ENCODE measurements at regions of chr2 and their contacts with region 1.

Region 1: DNA sequence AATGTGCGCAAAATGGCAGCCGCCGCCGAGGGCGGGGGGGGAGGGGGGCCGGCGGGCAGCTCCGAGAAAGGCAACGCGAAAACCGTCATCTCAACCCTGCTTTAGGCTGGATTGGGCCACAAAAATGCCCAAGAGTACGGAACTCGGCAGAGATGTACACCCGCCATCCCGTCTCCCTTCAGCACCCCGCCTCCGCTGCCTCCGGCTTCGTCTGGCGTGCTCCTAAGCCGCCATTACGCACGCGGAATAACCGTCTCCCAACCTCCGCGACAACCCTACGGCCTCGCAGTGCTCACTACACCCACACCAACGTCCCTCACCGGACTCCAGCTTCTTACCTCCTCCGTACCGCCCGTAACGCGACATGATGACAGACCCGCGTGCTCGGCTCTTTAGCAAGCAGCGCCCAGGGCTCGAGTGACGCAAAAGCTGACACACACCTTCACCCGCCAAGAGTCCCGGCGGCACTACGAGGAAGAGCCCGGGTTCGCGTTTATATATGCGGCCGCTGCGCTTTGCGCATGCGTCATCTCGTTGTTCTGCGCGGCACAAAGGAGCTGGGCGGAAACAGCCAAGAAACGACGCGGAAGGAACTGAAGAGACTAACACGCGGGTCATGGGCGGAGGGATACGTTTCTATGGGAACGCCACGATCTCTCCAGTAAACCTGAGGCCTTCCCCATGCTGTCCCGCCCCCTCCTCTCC is at the start of gene SRSF7:
- DNase-seq: peak; percentile 98 to 99
- H3K4me3 ChIP-seq: peak within 1 kb of the TSS; percentile 93 to 100 (median 97)
- H3K27ac ChIP-seq: peak within 1 kb of the TSS; percentile 100
- H3K4me1 ChIP-seq: peaks cover 0 to 8% (median 2%) of the 10 kb centered on the region in 4 experiments; a peak in 3 of 7 replicates
- H3K27me3 ChIP-seq: no peaks in the 10 kb centered on the region
- CTCF ChIP-seq: no peak
- EP300 ChIP-seq: 0 out of 3 replicates have a peak, but pooled peaks of 1 of the 2 experiments have one; percentile 63
- POLR2A ChIP-seq: peak; percentile 100
- RAD21 ChIP-seq: peak; percentile 2 to 6; a peak in 1 of 4 replicates
- total RNA-seq, gene SRSF7: 370 and 378 TPM in 2 replicates

Region 2: GRCh38 chr2:38549071-38549704 is 201.9 kb before region 1 on chr2:
- CTCF ChIA-PET with region 1: no interaction called
- POLR2A ChIA-PET with region 1: interaction called, 13 read pairs
- DNase-seq: no peak
- H3K4me3 ChIP-seq: no peak overlapping the region
- H3K27ac ChIP-seq: no peak overlapping the region
- H3K4me1 ChIP-seq: peaks cover 0 to 4% (median 1%) of the 10 kb centered on the region in 4 experiments; a peak in 1 of 7 replicates
- H3K27me3 ChIP-seq: no peaks in the 10 kb centered on the region
- CTCF ChIP-seq: no peak
- EP300 ChIP-seq: no peak
- POLR2A ChIP-seq: no peak
- RAD21 ChIP-seq: no peak

Region 3: GRCh38 chr2:38581193-38582147 is 169.6 kb before region 1 on chr2:
- CTCF ChIA-PET with region 1: interaction called, 7 read pairs
- POLR2A ChIA-PET with region 1: interaction called, 33 read pairs
- DNase-seq: no peak
- H3K4me3 ChIP-seq: no peak overlapping the region
- H3K27ac ChIP-seq: no peak overlapping the region
- H3K4me1 ChIP-seq: peaks cover 0 to 13% (median 2%) of the 10 kb centered on the region in 4 experiments; a peak in 4 of 7 replicates
- H3K27me3 ChIP-seq: no peaks in the 10 kb centered on the region
- CTCF ChIP-seq: peak in 2 of 3 experiments; percentile 57 to 68; a peak in 3 of 4 replicates
- EP300 ChIP-seq: no peak
- POLR2A ChIP-seq: peak in 1 of 2 experiments; percentile 4; a peak in 1 of 3 replicates
- RAD21 ChIP-seq: peak; percentile 75 to 78

Region 4: GRCh38 chr2:38672445-38673391 is 78.3 kb before region 1 on chr2:
- CTCF ChIA-PET with region 1: no interaction called
- POLR2A ChIA-PET with region 1: interaction called, 28 read pairs
- DNase-seq: no peak
- H3K4me3 ChIP-seq: no peak overlapping the region
- H3K27ac ChIP-seq: no peak overlapping the region
- H3K4me1 ChIP-seq: peaks cover 0 to 4% (median 0%) of the 10 kb centered on the region in 4 experiments; a peak in 2 of 7 replicates
- H3K27me3 ChIP-seq: no peaks in the 10 kb centered on the region
- CTCF ChIP-seq: no peak
- EP300 ChIP-seq: no peak
- POLR2A ChIP-seq: no peak
- RAD21 ChIP-seq: no peak

Region 5: DNA sequence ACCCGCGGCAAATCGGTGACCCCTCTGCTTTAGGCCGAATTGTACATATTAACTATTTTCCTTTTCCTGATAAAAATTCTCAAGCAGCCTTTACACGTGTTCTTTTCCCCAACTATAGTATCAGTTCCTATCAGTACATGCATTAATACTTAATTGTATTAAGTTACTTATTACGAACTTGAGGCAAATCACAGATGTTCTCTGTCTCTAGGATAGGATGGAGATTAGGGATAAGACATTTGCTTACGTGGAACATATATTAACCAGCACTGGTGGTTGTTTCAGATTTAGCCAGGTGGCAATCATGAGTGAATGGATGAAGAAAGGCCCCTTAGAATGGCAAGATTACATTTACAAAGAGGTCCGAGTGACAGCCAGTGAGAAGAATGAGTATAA is 27.6 kb after region 1 on chr2:
- CTCF ChIA-PET with region 1: no interaction called
- POLR2A ChIA-PET with region 1: interaction called, 124 read pairs
- DNase-seq: no peak
- H3K4me3 ChIP-seq: peak overlapping the region; percentile 78 to 98 (median 90)
- H3K27ac ChIP-seq: no peak overlapping the region
- H3K4me1 ChIP-seq: no peaks in the 10 kb centered on the region
- H3K27me3 ChIP-seq: no peaks in the 10 kb centered on the region; a peak in 2 of 7 replicates
- CTCF ChIP-seq: no peak
- EP300 ChIP-seq: no peak
- POLR2A ChIP-seq: no peak
- RAD21 ChIP-seq: no peak

Region 6: DNA sequence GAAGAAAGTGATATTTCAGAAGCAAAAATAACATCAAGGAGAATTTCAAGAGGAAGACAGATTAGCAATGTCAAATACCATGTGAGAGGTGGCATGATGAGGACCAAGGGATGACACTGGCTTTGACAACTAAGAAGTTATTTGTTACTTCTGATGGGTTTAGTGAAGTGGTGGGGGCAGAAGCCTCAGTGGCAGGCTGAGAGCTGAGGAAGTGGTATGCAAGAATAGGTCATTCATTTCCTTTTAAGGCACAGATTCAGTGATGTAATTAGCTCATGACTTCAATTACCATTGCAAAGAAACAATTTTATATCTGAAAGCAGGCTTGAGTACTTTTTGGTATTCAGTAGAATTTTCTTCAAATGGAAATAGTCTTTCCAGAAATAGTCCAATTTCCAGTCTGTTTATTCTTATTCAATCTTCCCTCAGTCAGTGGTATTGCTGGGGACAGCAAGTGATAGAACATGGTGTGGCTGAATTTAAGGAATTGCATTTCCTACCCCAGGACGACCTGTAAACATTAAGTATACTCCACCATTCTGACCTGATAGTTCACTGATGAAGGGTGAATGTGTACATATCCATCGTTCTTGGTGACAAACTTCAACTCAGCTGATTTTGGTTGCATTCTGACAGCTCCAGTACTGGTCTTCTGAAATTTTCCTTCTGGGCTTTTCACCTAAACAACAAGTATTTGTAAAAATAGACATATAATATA is 55.1 kb after region 1 on chr2:
- CTCF ChIA-PET with region 1: no interaction called
- POLR2A ChIA-PET with region 1: interaction called, 12 read pairs
- DNase-seq: no peak
- H3K4me3 ChIP-seq: no peak overlapping the region
- H3K27ac ChIP-seq: no peak overlapping the region
- H3K4me1 ChIP-seq: no peaks in the 10 kb centered on the region
- H3K27me3 ChIP-seq: no peaks in the 10 kb centered on the region
- CTCF ChIP-seq: no peak
- EP300 ChIP-seq: no peak
- POLR2A ChIP-seq: no peak
- RAD21 ChIP-seq: no peak

Region 7: DNA sequence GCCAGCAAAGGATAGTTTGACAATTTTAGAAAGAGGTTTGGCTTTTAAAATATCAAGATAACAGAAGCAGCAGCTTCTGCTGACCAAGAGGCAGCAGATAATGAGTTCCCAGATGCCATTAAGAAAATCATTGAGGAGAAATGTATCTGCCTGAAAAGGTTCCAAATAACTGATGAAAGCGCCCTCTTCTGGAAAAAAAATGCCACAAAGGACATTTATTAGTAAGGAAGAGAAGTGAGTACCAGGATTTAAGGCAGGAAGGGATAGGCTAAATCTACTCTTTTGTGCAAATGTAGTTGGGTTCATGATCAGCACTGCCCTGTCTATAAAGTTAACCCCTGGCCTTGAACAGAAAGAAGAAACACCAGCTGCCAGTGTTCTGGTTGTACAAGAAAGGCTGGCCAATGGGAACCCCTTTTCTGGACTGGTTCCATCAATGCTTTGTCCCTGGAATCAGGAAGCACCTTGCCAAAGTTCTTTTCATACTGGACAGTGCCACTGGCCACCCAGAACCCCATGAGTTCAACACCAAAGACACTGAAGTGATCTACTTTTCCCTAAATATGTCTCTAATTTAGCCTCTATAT is 84.1 kb after region 1 on chr2:
- CTCF ChIA-PET with region 1: interaction called, 5 read pairs
- POLR2A ChIA-PET with region 1: interaction called, 12 read pairs
- DNase-seq: no peak
- H3K4me3 ChIP-seq: no peak overlapping the region
- H3K27ac ChIP-seq: no peak overlapping the region
- H3K4me1 ChIP-seq: no peaks in the 10 kb centered on the region
- H3K27me3 ChIP-seq: no peaks in the 10 kb centered on the region
- CTCF ChIP-seq: peak in 2 of 3 experiments; percentile 29 to 51; a peak in 2 of 4 replicates
- EP300 ChIP-seq: no peak
- POLR2A ChIP-seq: no peak
- RAD21 ChIP-seq: peak; percentile 36 to 39

Region 8: DNA sequence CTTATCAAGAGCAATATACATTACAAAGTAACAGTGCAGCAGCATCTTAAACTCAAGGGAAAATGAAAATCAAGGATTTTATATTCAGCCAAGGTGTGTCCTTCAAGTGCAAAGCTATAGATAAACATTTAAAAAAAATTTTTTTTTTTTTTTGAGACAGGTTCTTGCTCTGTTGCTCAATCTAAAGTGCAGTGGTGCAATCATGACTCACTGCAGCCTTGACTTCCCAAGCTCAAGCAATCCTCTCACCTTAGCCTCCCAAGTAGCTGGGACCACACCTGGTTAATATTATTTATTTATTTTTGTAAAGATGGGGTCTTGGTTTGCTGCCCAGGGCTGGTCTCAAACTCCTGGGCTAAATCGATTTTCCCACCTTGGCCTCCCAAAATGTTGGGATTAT is 483.7 kb after region 1 on chr2:
- CTCF ChIA-PET with region 1: no interaction called
- POLR2A ChIA-PET with region 1: no interaction called
- DNase-seq: no peak
- H3K4me3 ChIP-seq: no peak overlapping the region
- H3K27ac ChIP-seq: no peak overlapping the region
- H3K4me1 ChIP-seq: no peaks in the 10 kb centered on the region
- H3K27me3 ChIP-seq: no peaks in the 10 kb centered on the region
- CTCF ChIP-seq: no peak
- EP300 ChIP-seq: no peak
- POLR2A ChIP-seq: no peak
- RAD21 ChIP-seq: no peak

Measured in H1 (cell line).